ENCODE measurements at regions of chr1 and their contacts with region 1.

Region 1: DNA sequence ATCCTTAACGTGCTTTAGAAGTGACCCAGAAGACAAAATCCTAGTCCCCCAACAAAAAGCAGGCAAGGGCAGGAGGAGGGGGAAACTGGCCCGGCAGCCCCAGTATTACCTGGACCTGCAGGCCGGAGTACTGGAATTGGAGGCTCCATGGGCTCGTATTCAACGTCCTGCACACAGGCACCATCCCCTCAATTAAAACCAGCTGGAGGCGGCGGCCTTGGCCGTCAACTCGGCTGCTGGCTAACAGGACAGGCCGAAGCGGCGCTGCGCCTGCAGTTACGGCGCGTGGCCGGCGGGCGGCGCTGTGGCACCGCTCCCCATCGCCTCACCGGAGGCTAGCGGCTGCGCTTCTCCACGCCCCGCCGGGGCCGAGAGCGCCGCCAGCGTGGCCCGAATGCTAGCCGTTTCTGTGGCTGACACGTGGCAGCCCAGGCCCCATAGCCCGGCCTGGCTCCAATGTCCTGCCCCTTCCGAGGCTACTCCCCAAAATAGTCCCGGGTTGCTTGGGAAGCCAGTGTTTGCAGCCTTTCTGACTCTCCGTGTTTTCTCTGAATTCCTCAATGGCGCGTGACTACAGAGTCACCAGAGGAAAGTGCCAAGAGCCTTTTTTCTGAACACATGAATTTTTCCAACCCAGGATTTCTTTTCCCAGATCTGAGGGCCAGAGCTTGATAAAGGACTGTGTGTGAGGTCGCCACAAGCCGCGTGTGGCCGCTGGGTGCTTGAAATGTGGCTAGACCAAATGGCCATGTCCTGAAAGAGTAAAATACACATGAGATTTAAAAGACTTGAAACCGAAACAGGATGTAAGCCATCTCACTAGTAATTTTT is 82.5 kb downstream of the HHIPL2 start:
- DNase-seq: peak; percentile 86
- H3K4me3 ChIP-seq: peak overlapping the region; percentile 14
- H3K27ac ChIP-seq: peak overlapping the region; percentile 72
- H3K4me1 ChIP-seq: no peaks in the 10 kb centered on the region
- H3K27me3 ChIP-seq: no peaks in the 10 kb centered on the region
- CTCF ChIP-seq: peak; percentile 100

Region 2: DNA sequence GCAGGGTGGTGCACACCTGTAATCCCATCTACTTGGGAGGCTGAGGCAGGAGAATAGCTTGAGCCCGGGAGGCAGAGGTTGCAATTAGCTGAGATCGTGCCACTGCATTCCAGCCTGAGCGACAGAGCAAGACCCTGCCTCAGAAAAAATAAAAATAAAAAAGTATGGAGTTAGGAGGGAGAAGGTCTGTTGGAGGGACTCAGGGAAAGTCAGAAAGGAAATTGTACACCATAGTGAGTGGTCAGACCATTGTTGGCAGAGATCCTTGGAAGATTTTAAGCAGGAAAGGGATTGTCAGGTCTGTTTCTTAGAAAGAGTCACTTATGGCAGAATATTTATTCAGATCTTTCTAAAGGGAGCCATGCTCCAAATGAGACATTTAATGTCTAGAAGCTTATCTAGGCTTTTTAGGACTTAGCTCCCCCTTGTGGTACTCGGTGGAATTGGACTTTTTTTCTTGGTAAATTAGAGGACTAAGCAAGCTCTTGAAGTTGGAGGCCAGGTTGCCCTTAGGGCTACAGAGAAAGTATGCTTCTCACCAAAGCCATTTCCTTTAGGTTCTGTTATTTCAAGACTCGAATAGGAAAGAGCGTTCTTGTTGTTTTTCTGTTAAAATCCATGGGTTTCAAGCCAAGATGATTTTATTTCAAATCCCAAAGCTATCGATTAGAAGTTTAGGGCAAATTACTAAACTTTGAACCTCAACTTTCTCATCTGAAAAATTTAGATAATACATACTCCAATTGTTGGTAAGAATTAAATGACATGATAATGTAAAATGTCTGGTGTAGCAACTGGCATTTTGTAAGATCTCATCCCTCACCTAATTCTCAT is 169.0 kb after region 1 on chr1:
- intact Hi-C with region 1: loop called (anchors 2 kb)
- DNase-seq: peak; percentile 88
- H3K4me3 ChIP-seq: no peak overlapping the region
- H3K27ac ChIP-seq: no peak overlapping the region
- H3K4me1 ChIP-seq: no peaks in the 10 kb centered on the region
- H3K27me3 ChIP-seq: no peaks in the 10 kb centered on the region
- CTCF ChIP-seq: peak; percentile 89

Region 3: GRCh38 chr1:222706815-222707214 is 241.4 kb after region 1 on chr1:
- intact Hi-C with region 1: loop called (anchors 10 kb)
- DNase-seq: no peak
- H3K4me3 ChIP-seq: no peak overlapping the region
- H3K27ac ChIP-seq: no peak overlapping the region
- H3K4me1 ChIP-seq: no peaks in the 10 kb centered on the region
- H3K27me3 ChIP-seq: no peaks in the 10 kb centered on the region
- CTCF ChIP-seq: no peak